ENCODE measurements at regions of chr5 and their contacts with region 1.

Region 1: DNA sequence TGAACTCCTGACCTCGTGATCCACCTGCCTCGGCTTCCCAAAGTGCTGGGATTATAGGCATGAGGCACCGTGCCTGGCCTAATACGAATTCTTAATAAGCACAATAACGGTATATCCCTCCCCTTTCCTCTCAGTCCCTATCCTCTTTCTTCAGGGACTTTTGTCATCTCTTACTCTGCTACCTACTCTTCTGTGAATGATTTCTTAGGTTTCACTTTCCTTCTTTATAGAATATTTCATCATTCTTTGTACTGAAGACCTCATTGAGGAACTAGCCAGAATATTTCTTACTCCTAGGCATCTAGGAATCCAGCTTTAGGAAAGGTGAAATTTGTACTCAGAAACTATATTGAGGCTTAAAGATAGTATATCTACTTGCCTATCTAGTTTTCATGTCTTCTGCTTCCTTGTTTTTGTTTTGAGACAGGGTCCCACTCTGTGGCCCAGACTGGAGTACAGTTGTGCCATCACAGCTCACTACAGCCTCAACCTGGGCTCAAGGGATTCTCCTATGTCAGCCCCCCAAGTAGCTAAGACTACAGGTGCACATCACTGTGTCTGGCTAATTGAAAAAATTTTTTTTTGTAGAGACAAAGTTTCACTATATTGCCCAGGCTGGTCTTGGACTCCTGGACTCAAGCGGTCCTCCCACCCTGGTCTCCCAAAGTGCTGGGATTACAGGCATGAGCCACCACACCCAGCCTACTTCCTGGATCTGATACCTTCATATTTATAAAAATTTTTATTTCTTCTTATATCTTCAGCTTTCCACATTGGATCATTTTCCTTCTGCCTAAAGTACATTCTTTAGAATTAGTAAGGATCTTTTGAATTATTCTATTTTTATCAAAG is 69.7 kb downstream of the GPBP1 start:
- DNase-seq: no peak
- ATAC-seq: no peak
- H3K4me3 ChIP-seq: no peak overlapping the region
- H3K4me3 Mint-ChIP-seq: no peak overlapping the region
- H3K27ac ChIP-seq: peak overlapping the region; percentile 27
- H3K27ac Mint-ChIP-seq: peak overlapping the region in 8 of 9 donors; percentile 14 to 82 (median 52)
- H3K4me1 ChIP-seq: peaks cover 0 to 12% of the 10 kb centered on the region in 2 donors
- H3K4me1 Mint-ChIP-seq: peaks cover 25 to 64% (median 53%) of the 10 kb centered on the region in 7 donors
- H3K27me3 ChIP-seq: no peaks in the 10 kb centered on the region
- H3K27me3 Mint-ChIP-seq: no peaks in the 10 kb centered on the region

Region 2: DNA sequence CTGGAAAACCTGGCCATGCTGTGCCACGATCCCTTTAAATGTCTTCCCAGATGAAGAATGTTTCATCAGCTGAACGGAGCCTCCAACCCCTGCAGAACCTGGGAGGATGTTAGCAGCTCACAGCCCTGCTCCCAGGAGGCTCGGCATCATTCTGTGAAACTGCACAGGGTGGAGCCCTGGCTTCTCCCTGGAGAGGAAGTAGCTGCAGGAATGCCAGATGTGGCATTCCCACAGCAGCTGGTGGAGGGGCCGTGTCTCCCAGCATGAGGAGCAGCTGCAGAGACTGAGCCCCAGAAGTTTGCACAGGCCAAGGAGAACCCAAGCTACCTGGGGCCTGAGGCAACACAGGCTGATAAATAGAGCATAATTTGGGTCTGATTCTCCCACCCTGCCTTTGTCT is 593.9 kb before region 1 on chr5:
- CTCF ChIA-PET with region 1: no interaction called
- POLR2A ChIA-PET with region 1: no interaction called
- intact Hi-C with region 1: no loop called
- DNase-seq: no peak
- ATAC-seq: no peak
- H3K4me3 ChIP-seq: no peak overlapping the region
- H3K4me3 Mint-ChIP-seq: no peak overlapping the region
- H3K27ac ChIP-seq: no peak overlapping the region
- H3K27ac Mint-ChIP-seq: peak overlapping the region in 2 of 9 donors; percentile 16 to 37
- H3K4me1 ChIP-seq: peaks cover 0 to 23% of the 10 kb centered on the region in 2 donors
- H3K4me1 Mint-ChIP-seq: peaks cover 21 to 61% (median 47%) of the 10 kb centered on the region in 7 donors
- H3K27me3 ChIP-seq: no peaks in the 10 kb centered on the region
- H3K27me3 Mint-ChIP-seq: peaks cover 0 to 17% (median 0%) of the 10 kb centered on the region in 5 donors

Region 3: DNA sequence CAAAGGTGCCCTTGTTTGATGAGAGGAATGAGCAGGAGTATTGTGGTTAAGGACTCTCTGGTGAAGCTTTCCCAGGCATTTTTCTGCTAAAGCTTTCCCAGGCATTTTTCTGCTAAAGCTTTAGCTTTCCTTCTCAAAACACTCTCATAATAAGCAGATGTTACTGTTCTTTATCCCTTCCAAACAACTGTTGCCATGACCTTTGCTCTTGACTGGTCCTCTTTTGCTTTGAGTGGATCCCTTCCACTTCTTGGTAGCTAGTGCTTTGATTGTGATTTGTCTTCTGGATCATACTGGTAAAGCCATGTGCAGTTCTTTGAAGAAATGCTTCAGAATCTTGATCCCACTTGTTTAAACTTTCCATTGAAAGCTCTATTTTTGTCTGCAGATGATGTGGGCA is 16.2 kb after region 1 on chr5:
- CTCF ChIA-PET with region 1: no interaction called
- POLR2A ChIA-PET with region 1: interaction called, 4 read pairs
- intact Hi-C with region 1: loop called in 1 of 2 experiments (anchors 2 kb)
- DNase-seq: no peak
- ATAC-seq: no peak
- H3K4me3 ChIP-seq: no peak overlapping the region
- H3K4me3 Mint-ChIP-seq: no peak overlapping the region
- H3K27ac ChIP-seq: no peak overlapping the region
- H3K27ac Mint-ChIP-seq: peak overlapping the region in 4 of 9 donors; percentile 15 to 74 (median 70)
- H3K4me1 ChIP-seq: no peaks in the 10 kb centered on the region
- H3K4me1 Mint-ChIP-seq: peaks cover 5 to 42% (median 26%) of the 10 kb centered on the region in 7 donors
- H3K27me3 ChIP-seq: no peaks in the 10 kb centered on the region
- H3K27me3 Mint-ChIP-seq: no peaks in the 10 kb centered on the region